ENCODE measurements at regions of chr4 and their contacts with region 1.

Region 1: GRCh38 chr4:36244257-36245079 is at the start of gene ARAP2:
- DNase-seq: peak; percentile 82
- CTCF ChIP-seq: peak; percentile 18

Region 2: DNA sequence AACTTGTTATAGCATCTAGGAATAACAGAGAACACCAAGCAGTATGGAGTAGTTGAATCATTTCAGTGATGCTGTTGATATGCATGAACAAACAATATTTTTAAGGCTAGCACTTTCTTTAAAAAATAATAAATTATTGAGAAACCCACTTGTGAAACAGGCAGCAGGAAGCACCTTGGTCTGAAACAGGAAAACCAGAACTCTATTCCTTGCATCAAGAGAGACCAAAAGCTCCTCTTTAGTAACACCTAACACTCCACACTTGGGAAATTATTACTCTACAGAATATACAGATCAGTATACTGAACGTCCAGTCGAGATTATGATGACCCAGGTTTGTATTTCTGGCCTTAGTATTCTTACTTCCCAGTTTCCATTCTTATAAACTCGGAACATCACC is 129.2 kb before region 1 on chr4:
- CTCF ChIA-PET with region 1: no interaction called
- POLR2A ChIA-PET with region 1: no interaction called
- DNase-seq: no peak
- CTCF ChIP-seq: no peak

Region 3: DNA sequence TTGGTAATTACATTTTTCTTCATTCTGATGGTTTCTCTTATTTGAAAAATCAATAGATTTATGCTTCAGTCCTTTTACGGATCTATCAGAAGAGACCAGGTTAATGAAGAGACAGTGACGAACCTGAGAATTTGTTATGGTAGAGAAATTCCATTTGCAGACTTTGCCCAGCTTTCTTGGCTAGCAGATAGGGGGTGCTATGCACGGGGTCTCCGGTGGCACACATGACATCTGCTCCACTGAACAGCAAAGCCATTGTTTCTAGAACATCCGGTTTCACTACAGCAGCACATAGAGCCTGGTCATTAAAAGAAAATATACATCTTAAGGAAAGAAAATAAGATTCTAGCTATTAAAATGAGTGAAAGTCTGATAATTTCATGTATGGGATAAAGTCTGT is 85.3 kb before region 1 on chr4:
- CTCF ChIA-PET with region 1: no interaction called
- POLR2A ChIA-PET with region 1: no interaction called
- DNase-seq: no peak
- CTCF ChIP-seq: no peak

Region 4: GRCh38 chr4:36209941-36210649 is 34.4 kb before region 1 on chr4:
- CTCF ChIA-PET with region 1: interaction called, 11 read pairs
- POLR2A ChIA-PET with region 1: no interaction called
- DNase-seq: no peak
- CTCF ChIP-seq: no peak

Region 5: GRCh38 chr4:36255577-36255976 is 11.1 kb after region 1 on chr4:
- CTCF ChIA-PET with region 1: interaction called, 15 read pairs
- POLR2A ChIA-PET with region 1: interaction called, 14 read pairs
- DNase-seq: peak; percentile 42
- CTCF ChIP-seq: no peak

Region 6: DNA sequence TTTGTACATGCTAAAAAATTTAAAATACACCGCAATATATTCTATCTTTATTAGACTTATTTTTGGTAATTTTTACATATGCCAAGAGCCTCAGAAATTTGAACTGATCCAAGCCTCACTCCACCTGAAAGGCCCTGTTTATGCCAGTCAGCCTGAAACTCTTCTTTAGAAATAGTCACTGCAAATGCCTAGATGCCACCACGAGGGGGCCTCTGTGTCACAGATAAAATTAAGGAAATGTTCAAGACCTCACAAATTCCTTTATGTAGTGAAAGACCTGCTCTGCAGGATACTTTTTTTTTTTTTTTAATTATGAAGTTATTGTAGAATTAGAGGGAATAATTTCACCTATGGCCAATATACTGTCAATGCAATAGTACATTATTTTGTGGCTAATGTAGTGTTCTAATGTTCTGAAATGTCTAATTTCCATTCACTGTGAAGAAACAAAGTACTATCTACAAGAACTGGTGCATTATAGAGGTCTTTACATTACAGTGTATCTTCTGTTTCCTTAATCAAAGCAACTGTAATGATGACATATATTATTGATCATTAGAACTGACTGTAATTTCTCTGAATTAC is 106.7 kb after region 1 on chr4:
- CTCF ChIA-PET with region 1: interaction called, 24 read pairs
- POLR2A ChIA-PET with region 1: no interaction called
- DNase-seq: peak; percentile 47
- CTCF ChIP-seq: peak; percentile 80

Region 7: DNA sequence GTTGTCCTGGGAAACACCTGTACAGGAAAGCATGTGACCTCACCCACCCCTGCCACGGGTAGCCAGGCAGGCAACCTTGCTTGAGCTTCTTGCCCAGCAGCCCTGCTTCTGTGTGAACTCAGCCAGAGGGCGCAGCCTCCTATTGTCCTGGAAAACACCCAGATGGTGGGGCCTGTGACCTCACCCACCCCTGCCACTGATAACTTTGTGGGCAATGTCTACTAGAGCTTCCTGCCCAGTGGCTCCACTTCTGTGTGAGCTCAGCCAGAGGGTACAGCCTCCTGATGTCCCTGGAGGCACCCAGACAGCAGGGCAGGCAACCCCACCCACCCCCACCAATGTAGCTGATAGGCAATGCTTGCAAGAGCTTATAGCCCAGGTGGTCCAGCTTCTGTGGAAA is 183.2 kb after region 1 on chr4:
- CTCF ChIA-PET with region 1: no interaction called
- POLR2A ChIA-PET with region 1: no interaction called
- DNase-seq: no peak
- CTCF ChIP-seq: no peak

Measured in GM10248 (cell line).